Dorsolateral prefrontal cortex (tissue), 120 donors: ENCODE measurements at regions of chr7 and their contacts with region 1.

Region 1: DNA sequence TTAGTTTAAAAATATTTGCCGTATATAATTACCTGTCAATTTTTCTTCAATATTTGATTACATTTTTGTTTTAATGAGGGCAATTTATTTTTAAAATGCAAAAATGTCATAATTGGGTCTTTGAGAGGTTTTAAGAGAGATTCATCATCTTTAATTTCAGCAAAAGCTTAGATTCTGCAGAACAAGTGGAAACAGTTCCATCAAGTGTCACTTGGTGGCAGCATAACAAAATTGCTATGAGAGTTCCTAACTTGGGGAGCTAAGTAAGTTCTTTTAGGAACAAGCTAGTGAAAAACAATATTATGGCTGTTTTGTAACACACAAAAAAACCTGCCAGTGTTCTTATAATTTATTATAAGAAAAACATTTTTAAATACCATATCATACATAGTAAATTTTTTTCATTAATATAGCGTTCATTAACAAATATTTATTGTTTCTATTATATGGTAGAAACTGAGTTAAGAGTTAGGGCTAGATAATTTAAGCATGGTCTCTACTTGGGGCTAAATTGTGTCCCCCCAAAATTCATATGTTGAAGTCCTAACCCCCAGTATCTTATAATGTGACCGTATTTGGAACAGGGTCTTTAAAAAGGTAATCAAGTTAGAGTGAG is 155.2 kb downstream of the MAGI2 start:
- DNase-seq: peak in 3 of 10 donors; percentile 10 to 50 (median 45)
- H3K4me3 ChIP-seq: no peak overlapping the region
- H3K27ac ChIP-seq: peak overlapping the region in 2 of 59 donors; percentile 46 to 49
- H3K27me3 ChIP-seq: no peaks in the 10 kb centered on the region
- CTCF ChIP-seq: peak; percentile 69 to 96 (median 87)

Region 2: DNA sequence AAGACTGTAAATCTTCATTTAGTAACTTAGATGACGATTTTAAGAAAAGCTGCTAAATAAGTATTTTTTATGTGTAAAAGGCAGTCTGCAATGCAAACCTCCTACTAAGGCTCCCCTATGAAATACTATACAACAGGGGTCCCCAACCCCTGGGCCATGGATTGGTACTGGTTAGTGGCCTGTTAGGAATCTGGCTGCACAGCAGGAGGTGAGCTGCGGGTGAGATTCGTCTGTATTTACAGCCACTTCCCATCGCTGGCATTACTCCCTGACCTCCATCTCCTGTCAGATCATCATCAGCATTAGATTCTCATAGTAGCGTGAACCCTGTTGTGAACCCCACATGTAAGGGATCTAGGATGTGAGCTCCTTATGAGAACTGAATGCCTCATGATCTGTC is 425.1 kb before region 1 on chr7:
- intact Hi-C with region 1: no loop called
- DNase-seq: no peak
- H3K4me3 ChIP-seq: no peak overlapping the region
- H3K27ac ChIP-seq: no peak overlapping the region
- H3K27me3 ChIP-seq: no peaks in the 10 kb centered on the region
- CTCF ChIP-seq: no peak

Region 3: GRCh38 chr7:79337717-79338116 is 39.5 kb after region 1 on chr7:
- intact Hi-C with region 1: loop called in 1 of 2 experiments (anchors 5 kb)
- DNase-seq: peak in 1 of 10 donors; percentile 23
- H3K4me3 ChIP-seq: peak overlapping the region in 49 of 59 donors; percentile 0 to 54 (median 29)
- H3K27ac ChIP-seq: peak overlapping the region in 32 of 59 donors; percentile 1 to 73 (median 36)
- H3K27me3 ChIP-seq: no peaks in the 10 kb centered on the region
- CTCF ChIP-seq: no peak

Region 4: GRCh38 chr7:79548727-79549126 is 250.5 kb after region 1 on chr7:
- intact Hi-C with region 1: loop called in 1 of 2 experiments (anchors 10 kb)
- DNase-seq: no peak
- H3K4me3 ChIP-seq: no peak overlapping the region
- H3K27ac ChIP-seq: no peak overlapping the region
- H3K27me3 ChIP-seq: no peaks in the 10 kb centered on the region
- CTCF ChIP-seq: peak in 45 of 56 donors; percentile 10 to 71 (median 35)